Activated CD8-positive, alpha-beta T cell treated with anti-CD3 and anti-CD28 coated beads for 36 hours (primary cell): ENCODE measurements at regions of chr2 and their contacts with region 1.

Region 1: GRCh38 chr2:86105252-86105968 is at the start of gene POLR1A:
- DNase-seq: peak; percentile 89
- ATAC-seq: peak; percentile 83
- H3K4me3 Mint-ChIP-seq: peak within 1 kb of the TSS; percentile 86
- H3K27ac Mint-ChIP-seq: peak within 1 kb of the TSS; percentile 98
- H3K4me1 Mint-ChIP-seq: peaks cover 60% of the 10 kb centered on the region
- H3K27me3 Mint-ChIP-seq: no peaks in the 10 kb centered on the region
- CTCF ChIP-seq: no peak
- total RNA-seq, gene POLR1A: 41.8 to 42.1 TPM

Region 2: GRCh38 chr2:86118133-86118532 is 12.7 kb after region 1 on chr2:
- CTCF ChIA-PET with region 1: interaction called, 3 read pairs
- POLR2A ChIA-PET with region 1: interaction called, 13 read pairs
- intact Hi-C with region 1: no loop called
- DNase-seq: no peak
- ATAC-seq: no peak
- H3K4me3 Mint-ChIP-seq: no peak overlapping the region
- H3K27ac Mint-ChIP-seq: no peak overlapping the region
- H3K4me1 Mint-ChIP-seq: peaks cover 7% of the 10 kb centered on the region
- H3K27me3 Mint-ChIP-seq: no peaks in the 10 kb centered on the region
- CTCF ChIP-seq: no peak

Region 3: GRCh38 chr2:86185517-86186212 is 80.3 kb after region 1 on chr2:
- CTCF ChIA-PET with region 1: no interaction called
- POLR2A ChIA-PET with region 1: interaction called, 6 read pairs
- intact Hi-C with region 1: loop called (anchors 10 kb)
- DNase-seq: no peak
- ATAC-seq: peak; percentile 55
- H3K4me3 Mint-ChIP-seq: peak overlapping the region; percentile 51
- H3K27ac Mint-ChIP-seq: peak overlapping the region; percentile 93
- H3K4me1 Mint-ChIP-seq: peaks cover 67% of the 10 kb centered on the region
- H3K27me3 Mint-ChIP-seq: no peaks in the 10 kb centered on the region
- CTCF ChIP-seq: no peak